A549 (cell line): ENCODE measurements at regions of chr12 and their contacts with region 1.

Region 1: DNA sequence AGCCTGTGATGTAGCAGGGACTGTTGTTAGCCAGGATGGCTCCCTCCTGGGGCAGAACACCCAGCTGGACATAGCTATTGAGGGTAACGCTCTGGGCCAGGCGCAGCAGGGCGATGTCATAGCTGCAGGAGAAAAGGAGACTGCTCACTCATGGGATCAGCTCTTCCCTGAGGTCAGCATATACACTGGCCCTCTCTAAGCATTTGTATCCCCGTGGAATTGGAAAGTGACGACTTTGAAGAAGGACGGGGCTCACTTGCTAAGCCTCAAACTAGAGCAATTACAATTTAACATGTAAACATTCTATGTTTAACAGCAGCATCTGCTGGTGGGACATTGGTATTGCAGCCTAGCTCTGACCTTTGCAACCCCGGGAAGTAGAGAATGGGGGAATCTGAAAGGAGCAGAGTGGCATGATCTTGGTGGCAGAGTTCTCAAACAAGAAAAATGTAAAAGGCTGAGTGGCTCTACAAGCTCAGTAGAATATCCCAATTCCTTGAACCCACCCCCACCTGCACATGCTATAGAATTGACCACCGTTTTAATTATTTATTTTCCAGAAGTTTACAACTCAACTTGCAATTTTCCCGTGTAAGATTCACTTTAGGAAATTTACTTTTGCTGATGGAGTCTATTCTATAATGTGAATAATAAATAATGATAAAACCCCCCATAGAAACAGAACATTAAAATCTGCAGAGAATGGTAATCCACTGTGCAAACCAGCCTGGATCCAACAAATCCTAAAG is 5.0 kb downstream of the CELA1 start:
- DNase-seq: peak; percentile 78 to 84
- ATAC-seq: peak; percentile 90 to 92
- H3K4me3 ChIP-seq: no peak overlapping the region
- H3K27ac ChIP-seq: peak overlapping the region; percentile 53 to 70
- H3K4me1 ChIP-seq: peaks cover 10% of the 10 kb centered on the region
- CTCF ChIP-seq: peak; percentile 99
- EP300 ChIP-seq: no peak
- POLR2A ChIP-seq: no peak
- RAD21 ChIP-seq: peak; percentile 99

Region 2: GRCh38 chr12:51246254-51246853 is 95.1 kb before region 1 on chr12:
- CTCF ChIA-PET with region 1: interaction called, 16 read pairs
- POLR2A ChIA-PET with region 1: no interaction called
- DNase-seq: no peak
- ATAC-seq: peak; percentile 40 to 44; a peak in 4 of 6 replicates
- H3K4me3 ChIP-seq: no peak overlapping the region
- H3K27ac ChIP-seq: no peak overlapping the region
- H3K4me1 ChIP-seq: no peaks in the 10 kb centered on the region
- CTCF ChIP-seq: no peak
- EP300 ChIP-seq: no peak
- POLR2A ChIP-seq: no peak
- RAD21 ChIP-seq: peak in 1 of 2 experiments; percentile 51; a peak in 2 of 5 replicates

Region 3: GRCh38 chr12:51270067-51270970 is 71.1 kb before region 1 on chr12 and contains the start of gene SMAGP:
- CTCF ChIA-PET with region 1: interaction called, 270 read pairs
- POLR2A ChIA-PET with region 1: interaction called, 41 read pairs
- DNase-seq: peak; percentile 61 to 68
- ATAC-seq: peak; percentile 70 to 75
- H3K4me3 ChIP-seq: peak within 1 kb of the TSS; percentile 68
- H3K27ac ChIP-seq: peak within 1 kb of the TSS; percentile 81 to 92
- H3K4me1 ChIP-seq: peaks cover 8% of the 10 kb centered on the region
- CTCF ChIP-seq: no peak; the same call in 2 of the 3 replicates
- EP300 ChIP-seq: no peak
- POLR2A ChIP-seq: peak; percentile 6
- RAD21 ChIP-seq: 0 out of 5 replicates have a peak, but pooled peaks of 1 of the 2 experiments have one; percentile 7
- polyA plus RNA-seq, gene SMAGP: 27.2 and 38.3 TPM in 2 replicates

Region 4: DNA sequence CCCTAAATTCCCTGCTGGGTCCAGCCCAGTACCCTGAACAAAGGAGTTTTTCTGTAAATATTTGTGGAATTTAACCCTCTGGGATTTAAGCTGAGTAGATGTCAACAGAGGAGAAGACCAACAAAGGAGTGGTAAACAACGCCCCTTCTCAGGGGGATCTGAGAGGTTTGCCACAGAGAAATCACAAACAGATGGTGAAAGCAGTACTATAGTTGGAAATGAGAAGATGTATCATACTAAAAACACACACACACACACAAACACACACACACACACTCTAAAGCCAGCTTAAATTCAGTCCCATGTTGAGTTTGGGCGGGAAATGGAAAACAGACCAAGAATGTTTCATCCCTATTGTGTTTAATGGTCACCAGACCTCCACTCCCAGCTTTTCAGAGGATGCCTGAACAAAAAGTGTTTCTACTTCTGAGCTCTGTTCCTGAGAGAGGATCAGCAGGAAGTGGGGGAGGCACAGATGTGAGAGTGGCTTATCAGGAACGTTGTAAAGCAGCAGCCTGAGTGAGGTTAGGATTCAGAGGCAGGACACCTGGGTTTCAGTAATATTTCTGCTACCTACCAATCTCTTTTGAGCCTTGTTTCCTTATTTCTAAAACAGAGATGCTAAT is 20.6 kb before region 1 on chr12:
- CTCF ChIA-PET with region 1: interaction called, 41 read pairs
- POLR2A ChIA-PET with region 1: interaction called, 3 read pairs
- DNase-seq: peak in 1 of 2 experiments; percentile 79
- ATAC-seq: peak; percentile 43 to 86; a peak in 4 of 6 replicates
- H3K4me3 ChIP-seq: no peak overlapping the region
- H3K27ac ChIP-seq: peak overlapping the region; percentile 30 to 55; a peak in 5 of 6 replicates
- H3K4me1 ChIP-seq: peaks cover 28% of the 10 kb centered on the region
- CTCF ChIP-seq: no peak
- EP300 ChIP-seq: no peak
- POLR2A ChIP-seq: no peak
- RAD21 ChIP-seq: no peak

Region 5: GRCh38 chr12:51361161-51362016 is 20.0 kb after region 1 on chr12:
- CTCF ChIA-PET with region 1: interaction called, 110 read pairs
- POLR2A ChIA-PET with region 1: no interaction called
- DNase-seq: no peak
- ATAC-seq: peak; percentile 51 to 75; a peak in 4 of 6 replicates
- H3K4me3 ChIP-seq: no peak overlapping the region
- H3K27ac ChIP-seq: no peak overlapping the region
- H3K4me1 ChIP-seq: no peaks in the 10 kb centered on the region
- CTCF ChIP-seq: no peak
- EP300 ChIP-seq: no peak
- POLR2A ChIP-seq: no peak
- RAD21 ChIP-seq: peak; percentile 37 to 55; a peak in 3 of 5 replicates

Region 6: DNA sequence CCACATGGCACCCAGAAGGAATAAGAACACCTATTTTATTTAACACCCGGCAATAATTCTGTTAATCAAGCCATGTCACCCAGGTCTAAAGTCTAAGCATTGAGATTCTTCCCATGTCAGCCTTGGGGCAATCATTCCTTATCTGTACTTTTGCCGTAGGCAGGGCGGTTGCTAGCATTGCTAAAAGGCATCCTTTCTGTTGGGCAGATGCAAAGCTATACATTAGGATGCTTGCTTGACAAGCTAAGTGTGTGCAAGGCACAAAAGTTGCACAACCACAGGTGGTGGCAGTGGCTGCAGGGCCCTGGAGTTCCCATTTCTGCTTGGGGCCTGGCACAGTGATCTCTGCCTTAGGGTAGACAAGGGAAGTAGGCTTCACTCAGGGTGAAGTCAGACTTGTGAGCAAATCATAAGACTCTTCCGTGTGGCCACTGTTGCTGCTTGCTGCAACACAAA is 62.3 kb after region 1 on chr12:
- CTCF ChIA-PET with region 1: no interaction called
- POLR2A ChIA-PET with region 1: no interaction called
- DNase-seq: no peak
- ATAC-seq: no peak
- H3K4me3 ChIP-seq: no peak overlapping the region
- H3K27ac ChIP-seq: no peak overlapping the region
- H3K4me1 ChIP-seq: no peaks in the 10 kb centered on the region
- CTCF ChIP-seq: no peak
- EP300 ChIP-seq: no peak
- POLR2A ChIP-seq: no peak
- RAD21 ChIP-seq: no peak